ENCODE measurements at regions of chr3 and their contacts with region 1.

Region 1: GRCh38 chr3:140031170-140031569 is 96.2 kb downstream of the CLSTN2 start:
- DNase-seq: no peak
- ATAC-seq: no peak
- H3K4me3 ChIP-seq: no peak overlapping the region
- H3K27ac ChIP-seq: no peak overlapping the region
- H3K4me1 ChIP-seq: no peaks in the 10 kb centered on the region
- H3K27me3 ChIP-seq: no peaks in the 10 kb centered on the region; the same call in 1 of the 2 replicates
- CTCF ChIP-seq: no peak

Region 2: DNA sequence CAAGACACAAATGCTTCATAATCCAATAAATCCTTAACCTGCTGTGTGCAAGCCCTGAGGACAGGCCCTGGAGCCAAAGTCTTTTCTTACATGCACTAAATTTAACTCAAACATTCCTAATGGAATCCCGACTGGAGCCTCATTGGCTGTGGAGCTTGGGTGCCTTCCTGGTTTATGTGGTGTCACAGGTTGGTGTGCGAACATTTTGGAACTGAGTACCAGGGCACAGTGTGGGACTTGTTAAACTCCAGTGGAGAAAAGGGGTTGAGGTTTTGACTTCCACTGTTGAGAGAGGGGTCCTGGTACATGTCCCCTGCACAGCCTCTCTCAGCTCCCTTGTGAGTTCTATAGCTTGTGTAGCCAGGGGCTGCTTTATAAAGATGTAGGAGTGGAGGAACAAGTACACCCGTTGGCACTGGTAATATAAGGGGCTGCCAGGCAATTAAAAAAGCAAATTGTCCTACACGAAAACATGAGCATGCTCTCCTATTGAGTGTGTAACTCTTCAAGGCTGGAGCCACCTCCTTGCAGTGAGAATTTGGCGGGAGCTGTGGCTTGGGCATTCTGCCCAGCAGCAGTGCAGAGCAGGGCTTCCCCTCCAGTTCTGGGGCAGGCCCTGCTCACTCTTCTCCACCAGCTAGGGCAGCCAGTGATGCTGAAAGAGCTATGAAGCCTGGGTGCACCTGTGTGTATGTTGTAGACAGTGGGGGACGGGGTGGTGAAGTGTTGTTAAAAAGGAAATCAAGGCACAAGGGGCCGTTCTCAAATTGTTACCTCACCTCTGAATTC is 121.9 kb after region 1 on chr3:
- CTCF ChIA-PET with region 1: interaction called, 11 read pairs
- POLR2A ChIA-PET with region 1: no interaction called
- in situ Hi-C with region 1: no loop called
- intact Hi-C with region 1: no loop called
- DNase-seq: no peak
- ATAC-seq: no peak
- H3K4me3 ChIP-seq: no peak overlapping the region
- H3K27ac ChIP-seq: no peak overlapping the region
- H3K4me1 ChIP-seq: no peaks in the 10 kb centered on the region
- H3K27me3 ChIP-seq: no peaks in the 10 kb centered on the region
- CTCF ChIP-seq: no peak